Activated CD4-positive, alpha-beta memory T cell treated with anti-CD3 and anti-CD28 coated beads, Interleukin-2, amount 10 ng/mL, durations not matched to agents 7 days and 5 days (primary cell): ENCODE measurements at regions of chr10 and their contacts with region 1.

Region 1: GRCh38 chr10:100998991-100999741 is 442 bp upstream of the LZTS2 start:
- DNase-seq: peak; percentile 78
- H3K4me3 Mint-ChIP-seq: peak overlapping the region; percentile 77
- H3K27ac Mint-ChIP-seq: peak overlapping the region; percentile 66
- H3K4me1 Mint-ChIP-seq: peaks cover 28% of the 10 kb centered on the region
- H3K27me3 Mint-ChIP-seq: peaks cover 3% of the 10 kb centered on the region

Region 2: DNA sequence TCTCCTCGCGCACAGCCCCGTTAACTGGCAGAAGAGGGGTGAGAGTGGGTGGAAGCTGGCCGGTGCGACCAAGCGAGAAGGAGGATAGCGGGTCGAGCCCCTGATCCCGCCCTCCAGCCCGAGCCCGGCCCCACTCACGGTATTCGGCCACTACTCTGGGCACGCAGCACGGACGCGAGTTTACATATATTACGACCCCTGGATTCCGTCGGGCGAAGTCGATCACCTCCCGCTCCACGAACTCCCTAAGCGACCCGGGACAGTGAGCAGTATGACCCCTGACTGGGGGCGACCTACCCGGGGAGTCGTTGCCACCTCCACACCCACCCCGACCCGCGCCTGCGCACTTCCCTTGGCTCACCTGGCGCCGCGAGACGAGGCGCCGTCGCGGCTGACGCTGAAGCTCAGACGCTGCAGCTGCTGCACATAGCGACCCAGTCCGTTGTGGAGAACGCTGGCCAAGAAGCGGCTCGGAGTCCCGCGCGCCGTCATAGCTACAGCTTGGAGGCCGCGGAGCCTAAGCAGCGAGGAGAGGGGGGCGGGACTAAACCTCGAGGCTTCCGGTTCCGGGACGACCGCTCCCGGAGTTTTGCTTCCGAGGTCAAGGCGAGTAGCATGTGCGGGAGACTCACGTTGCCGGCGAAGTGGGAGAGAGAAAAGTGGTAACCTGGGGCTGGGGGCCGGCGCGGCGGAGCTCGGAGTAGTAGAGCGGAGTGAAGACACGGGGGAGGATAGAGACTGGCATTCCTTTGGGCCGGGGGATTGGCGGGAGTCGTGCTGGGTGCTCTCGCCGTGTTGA is 12.0 kb before region 1 on chr10 and contains the starts of genes MRPL43 and TWNK:
- CTCF ChIA-PET with region 1: interaction called, 28 read pairs
- POLR2A ChIA-PET with region 1: interaction called, 27 read pairs
- DNase-seq: peak; percentile 87
- H3K4me3 Mint-ChIP-seq: peak within 1 kb of the TSS; percentile 85
- H3K27ac Mint-ChIP-seq: peak within 1 kb of the TSS; percentile 81
- H3K4me1 Mint-ChIP-seq: peaks cover 33% of the 10 kb centered on the region
- H3K27me3 Mint-ChIP-seq: no peaks in the 10 kb centered on the region
- total RNA-seq, gene MRPL43: 47.8 to 49.3 TPM
- total RNA-seq, gene TWNK: 6.4 to 7.1 TPM

Region 3: DNA sequence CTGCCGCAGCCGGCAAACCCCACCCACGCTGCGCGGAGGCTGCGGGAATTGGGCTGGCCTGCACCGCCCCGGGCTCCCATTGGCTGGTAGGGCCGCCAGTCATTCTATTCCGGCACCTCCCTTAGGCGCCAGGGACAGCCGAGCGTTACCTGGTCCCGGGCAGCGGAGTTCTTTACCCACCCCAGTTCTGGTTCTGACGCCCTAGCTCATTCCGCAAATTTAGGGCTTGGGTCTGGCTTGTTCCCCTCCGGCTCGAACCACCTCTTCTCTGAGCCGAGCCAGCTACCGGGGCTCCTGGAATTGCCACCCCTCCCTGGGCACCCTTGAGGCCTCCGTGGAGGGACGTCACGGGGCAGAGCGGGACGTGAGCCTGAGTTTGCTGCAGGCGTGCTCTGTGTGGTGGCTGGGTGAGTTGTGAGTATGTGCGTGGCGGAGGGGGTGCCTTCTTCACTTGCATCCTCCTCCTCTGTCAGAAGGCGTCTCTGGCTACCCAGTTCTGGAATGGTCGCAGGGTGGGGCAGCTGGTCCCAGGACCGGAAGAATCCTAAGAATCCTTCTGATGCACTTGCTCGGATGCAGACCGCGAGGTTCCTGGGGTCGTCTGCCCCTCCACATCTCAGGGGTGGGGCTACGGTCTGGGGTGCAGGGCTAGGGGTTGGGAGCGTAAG is 32.1 kb after region 1 on chr10 and contains the starts of genes PDZD7 and SFXN3:
- CTCF ChIA-PET with region 1: interaction called, 25 read pairs
- POLR2A ChIA-PET with region 1: interaction called, 15 read pairs
- DNase-seq: peak; percentile 97
- H3K4me3 Mint-ChIP-seq: peak within 1 kb of the TSS; percentile 91
- H3K27ac Mint-ChIP-seq: peak within 1 kb of the TSS; percentile 96
- H3K4me1 Mint-ChIP-seq: peaks cover 27% of the 10 kb centered on the region
- H3K27me3 Mint-ChIP-seq: peaks cover 14% of the 10 kb centered on the region
- total RNA-seq, gene PDZD7: 1.1 to 1.9 TPM
- total RNA-seq, gene SFXN3: 91.4 to 95.0 TPM